ENCODE measurements at regions of chr22 and their contacts with region 1.

Region 1: DNA sequence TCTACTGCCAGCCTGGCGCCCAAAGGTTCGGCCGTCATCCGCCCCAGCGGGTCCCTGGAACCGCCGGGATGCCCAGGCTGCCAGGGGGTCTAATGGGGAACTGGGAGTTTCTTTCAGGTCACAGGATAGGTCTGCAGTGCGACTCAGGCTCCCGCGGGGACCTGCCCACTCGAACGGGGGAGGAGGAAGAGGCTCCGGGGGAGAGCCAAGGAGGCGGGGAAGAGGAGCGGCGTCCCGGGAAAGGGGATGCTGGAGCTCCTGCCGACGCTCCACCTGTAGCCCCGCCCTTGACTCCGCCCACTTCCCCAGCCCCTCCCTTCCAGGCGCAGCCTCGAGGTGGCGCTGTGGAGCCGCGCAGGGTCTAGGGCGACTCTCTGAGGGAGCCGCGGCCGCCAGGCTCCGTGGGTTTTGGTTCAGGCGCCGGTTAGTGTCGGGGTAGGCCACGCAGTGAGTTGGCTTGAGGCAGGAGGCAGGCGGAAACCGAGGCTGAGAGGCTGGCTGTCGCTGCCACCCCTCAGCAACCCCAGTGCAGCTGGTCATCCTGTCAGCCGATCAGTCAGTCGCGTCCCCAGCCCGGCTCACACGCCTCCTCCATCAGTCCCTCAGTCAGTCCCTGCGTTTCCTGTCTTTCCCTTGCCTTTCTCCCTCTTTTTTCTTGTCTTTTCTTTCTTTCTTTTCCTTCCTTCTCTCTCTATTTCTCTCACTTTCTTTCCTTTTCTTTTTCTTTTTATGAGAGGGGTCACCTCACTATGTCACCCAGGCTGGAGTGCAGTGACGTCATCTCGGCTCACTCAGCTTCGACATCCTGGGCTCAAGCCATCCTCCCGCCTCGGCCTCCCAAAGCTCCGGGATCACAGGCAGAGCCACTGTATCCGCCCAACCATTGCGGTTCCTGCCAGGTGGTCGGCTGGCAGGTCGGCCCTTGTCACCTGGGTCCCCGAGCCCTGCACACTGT is 26.4 kb downstream of the YWHAH start:
- DNase-seq: peak; percentile 91
- H3K4me3 ChIP-seq: peak overlapping the region in 3 of 4 donors; percentile 25 to 51 (median 36)
- H3K27ac ChIP-seq: peak overlapping the region in 3 of 4 donors; percentile 9 to 51 (median 37)
- H3K4me1 ChIP-seq: peaks cover 4 to 37% (median 16%) of the 10 kb centered on the region in 4 donors
- H3K27me3 ChIP-seq: no peaks in the 10 kb centered on the region
- CTCF ChIP-seq: peak; percentile 77 to 96 (median 93)
- EP300 ChIP-seq: no peak
- POLR2A ChIP-seq: peak; percentile 38

Region 2: DNA sequence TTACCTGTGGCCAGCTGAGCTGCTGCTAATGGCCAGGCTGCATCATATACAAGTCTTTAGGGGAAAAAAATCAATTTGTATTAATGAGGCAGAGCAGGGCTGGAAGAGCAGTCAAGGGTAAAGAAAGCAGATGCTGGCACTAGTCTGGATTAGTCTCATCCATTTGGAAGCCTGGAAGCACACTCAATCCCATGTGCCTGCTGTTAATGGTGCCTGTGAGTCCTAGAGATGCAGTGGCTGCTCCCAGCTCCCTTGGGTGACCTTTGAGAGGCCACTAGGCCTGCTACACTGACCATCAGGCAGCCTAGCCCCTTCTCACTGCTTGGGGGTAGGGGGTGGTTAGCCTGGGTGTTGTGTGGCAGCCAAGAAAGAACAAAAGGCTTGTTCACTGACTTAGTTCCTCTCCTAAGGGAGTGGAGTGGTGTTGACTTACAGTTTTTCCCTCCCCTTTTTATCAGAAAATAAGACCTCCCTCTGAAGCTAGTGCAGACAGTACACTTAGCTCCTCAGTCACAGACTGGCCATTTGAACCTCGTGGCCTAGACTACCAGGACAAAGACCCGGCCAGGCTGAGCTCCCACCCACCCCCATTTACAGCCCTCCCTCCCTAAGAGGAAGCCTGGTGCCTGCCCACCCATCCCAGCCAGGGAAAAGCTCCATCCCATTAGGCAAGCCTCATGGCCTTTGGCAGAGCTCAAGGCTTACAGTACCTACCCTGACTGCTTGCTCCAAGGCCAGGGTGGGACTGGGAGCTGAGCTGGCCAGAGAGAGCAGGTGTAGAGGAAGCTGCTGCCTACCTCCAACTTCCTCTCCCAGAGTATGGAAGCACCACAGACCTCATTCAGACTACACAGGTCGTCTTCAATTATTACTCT is 686.2 kb before region 1 on chr22:
- in situ Hi-C with region 1: no loop called
- intact Hi-C with region 1: no loop called
- DNase-seq: no peak
- H3K4me3 ChIP-seq: no peak overlapping the region
- H3K27ac ChIP-seq: peak overlapping the region; percentile 95 to 99 (median 98)
- H3K4me1 ChIP-seq: peaks cover 9 to 63% (median 13%) of the 10 kb centered on the region in 4 donors
- H3K27me3 ChIP-seq: no peaks in the 10 kb centered on the region
- CTCF ChIP-seq: no peak
- EP300 ChIP-seq: no peak
- POLR2A ChIP-seq: no peak

Region 3: DNA sequence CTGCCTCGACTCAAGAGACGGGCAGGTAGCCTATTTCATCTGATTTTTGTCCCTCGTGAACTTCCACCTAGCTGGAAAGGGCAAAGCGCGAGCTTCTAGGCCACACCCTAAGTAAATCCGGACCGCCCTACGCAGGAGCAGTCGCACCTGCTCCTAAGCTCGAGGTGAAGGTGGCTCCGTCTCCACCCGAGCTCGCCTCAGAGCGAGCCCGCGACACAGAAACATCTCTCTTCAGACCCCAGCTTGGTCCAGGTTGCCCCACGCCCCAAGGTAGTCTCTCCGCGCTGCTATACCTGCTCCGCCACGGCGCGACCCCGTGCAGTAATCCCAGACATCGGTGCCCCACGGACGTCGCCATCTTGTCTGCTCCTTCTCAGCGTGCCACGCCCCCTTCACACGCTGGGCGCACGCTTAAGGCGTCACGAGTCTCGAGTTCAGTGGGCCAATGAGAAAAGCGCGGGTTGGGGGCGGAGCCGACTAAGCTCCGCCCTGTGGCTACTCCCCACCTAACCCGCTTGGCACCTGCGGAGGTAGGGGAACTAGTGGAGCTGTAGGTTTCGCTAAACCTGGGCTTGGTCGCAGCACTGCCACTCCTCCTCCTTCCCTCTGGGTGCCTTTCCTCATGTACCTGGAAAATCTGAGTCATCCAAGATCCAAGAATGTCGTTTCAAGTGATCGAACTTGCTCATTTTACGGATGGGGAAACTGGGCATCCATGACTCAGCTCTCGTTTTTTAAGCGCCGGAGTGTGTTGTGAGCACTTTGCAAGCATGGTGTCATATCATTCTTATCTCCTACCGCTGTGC is 308.7 kb before region 1 on chr22 and contains the start of gene PISD:
- in situ Hi-C with region 1: loop called in 3 of 4 experiments (anchors 10 to 25 kb)
- intact Hi-C with region 1: no loop called
- DNase-seq: peak; percentile 98
- H3K4me3 ChIP-seq: peak within 1 kb of the TSS; percentile 63 to 97 (median 78)
- H3K27ac ChIP-seq: peak within 1 kb of the TSS; percentile 80 to 86 (median 84)
- H3K4me1 ChIP-seq: peaks cover 9 to 17% (median 14%) of the 10 kb centered on the region in 4 donors
- H3K27me3 ChIP-seq: no peaks in the 10 kb centered on the region
- CTCF ChIP-seq: no peak
- EP300 ChIP-seq: no peak
- POLR2A ChIP-seq: peak; percentile 90
- total RNA-seq, gene PISD: 33.7 to 111 (median 47.7) TPM

Region 4: DNA sequence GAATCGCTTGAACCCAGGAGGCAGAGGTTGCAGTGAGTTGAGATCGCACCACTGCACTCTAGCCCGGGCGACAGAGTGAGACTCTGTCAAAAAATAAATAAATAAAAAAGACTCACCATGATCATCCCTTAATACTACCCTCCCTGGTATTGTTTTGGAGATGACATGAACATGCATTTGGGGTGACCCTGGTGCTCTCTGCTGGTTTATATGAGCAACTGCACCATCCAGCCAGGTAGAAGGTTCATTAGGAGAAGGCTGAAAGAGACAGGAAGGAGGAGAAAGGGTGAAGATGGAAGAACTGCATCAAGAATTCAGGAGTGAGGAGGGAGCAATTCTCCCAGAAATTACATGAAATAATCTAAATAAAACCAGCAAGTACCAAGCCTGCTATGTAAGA is 110.1 kb after region 1 on chr22:
- in situ Hi-C with region 1: loop called in 3 of 4 experiments (anchors 5 to 25 kb)
- intact Hi-C with region 1: no loop called
- DNase-seq: peak; percentile 39
- H3K4me3 ChIP-seq: no peak overlapping the region
- H3K27ac ChIP-seq: no peak overlapping the region
- H3K4me1 ChIP-seq: peaks cover 0 to 33% (median 6%) of the 10 kb centered on the region in 4 donors
- H3K27me3 ChIP-seq: no peaks in the 10 kb centered on the region
- CTCF ChIP-seq: peak; percentile 47 to 82 (median 64)
- EP300 ChIP-seq: no peak
- POLR2A ChIP-seq: no peak

Region 5: GRCh38 chr22:32142600-32142999 is 171.8 kb after region 1 on chr22:
- in situ Hi-C with region 1: no loop called
- intact Hi-C with region 1: no loop called
- DNase-seq: no peak
- H3K4me3 ChIP-seq: no peak overlapping the region
- H3K27ac ChIP-seq: no peak overlapping the region
- H3K4me1 ChIP-seq: no peaks in the 10 kb centered on the region
- H3K27me3 ChIP-seq: no peaks in the 10 kb centered on the region
- CTCF ChIP-seq: no peak
- EP300 ChIP-seq: no peak
- POLR2A ChIP-seq: no peak

Region 6: GRCh38 chr22:32265882-32266767 is 295.4 kb after region 1 on chr22:
- in situ Hi-C with region 1: loop called in 3 of 4 experiments (anchors 10 to 25 kb)
- intact Hi-C with region 1: loop called (anchors 10 kb)
- DNase-seq: peak; percentile 66
- H3K4me3 ChIP-seq: peak overlapping the region in 1 of 4 donors; percentile 12
- H3K27ac ChIP-seq: peak overlapping the region in 1 of 4 donors; percentile 44
- H3K4me1 ChIP-seq: peaks cover 0 to 8% (median 0%) of the 10 kb centered on the region in 4 donors
- H3K27me3 ChIP-seq: no peaks in the 10 kb centered on the region
- CTCF ChIP-seq: peak; percentile 72 to 81 (median 76)
- EP300 ChIP-seq: no peak
- POLR2A ChIP-seq: no peak

Region 7: DNA sequence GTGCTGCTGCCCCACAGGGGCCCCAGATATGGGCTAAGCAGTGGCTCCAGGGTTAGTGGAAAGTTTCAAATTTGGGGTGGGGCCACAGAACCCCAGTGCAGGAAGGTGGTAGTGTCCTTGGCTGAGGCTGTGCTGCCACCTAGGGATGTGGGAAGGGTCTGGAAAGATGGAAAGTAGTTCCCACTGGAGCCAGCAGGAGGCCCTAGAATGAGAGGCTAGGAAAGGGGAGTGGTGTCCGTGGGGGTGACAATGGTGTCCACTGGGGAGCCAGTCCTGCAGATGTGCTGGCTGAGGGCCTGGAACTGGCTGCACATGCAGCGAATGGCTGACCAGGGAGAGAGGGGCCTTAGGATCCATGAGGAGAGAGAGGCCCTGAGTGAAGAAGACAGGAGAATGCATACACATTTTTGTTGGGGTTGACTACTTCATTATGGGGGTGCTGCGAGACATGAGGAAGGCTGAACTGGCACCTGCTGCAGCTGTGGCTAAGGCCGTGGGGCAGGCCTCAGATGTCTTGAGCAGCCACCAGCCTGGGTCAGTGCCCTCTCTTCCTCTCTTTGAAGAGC is 408.0 kb after region 1 on chr22:
- in situ Hi-C with region 1: no loop called
- intact Hi-C with region 1: no loop called
- DNase-seq: peak; percentile 22
- H3K4me3 ChIP-seq: no peak overlapping the region
- H3K27ac ChIP-seq: no peak overlapping the region
- H3K4me1 ChIP-seq: no peaks in the 10 kb centered on the region
- H3K27me3 ChIP-seq: no peaks in the 10 kb centered on the region
- CTCF ChIP-seq: peak; percentile 19 to 55 (median 40)
- EP300 ChIP-seq: no peak
- POLR2A ChIP-seq: no peak

Region 8: GRCh38 chr22:32474635-32475467 is 504.1 kb after region 1 on chr22 and contains the start of gene FBXO7:
- in situ Hi-C with region 1: loop called in 3 of 4 experiments (anchors 25 kb)
- intact Hi-C with region 1: no loop called
- DNase-seq: peak; percentile 93
- H3K4me3 ChIP-seq: peak within 1 kb of the TSS; percentile 67 to 95 (median 93)
- H3K27ac ChIP-seq: peak within 1 kb of the TSS; percentile 97 to 100 (median 98)
- H3K4me1 ChIP-seq: peaks cover 15 to 41% (median 29%) of the 10 kb centered on the region in 4 donors
- H3K27me3 ChIP-seq: no peaks in the 10 kb centered on the region
- CTCF ChIP-seq: peak in 4 of 5 experiments; percentile 17 to 53 (median 36)
- EP300 ChIP-seq: no peak
- POLR2A ChIP-seq: peak; percentile 91
- total RNA-seq, gene FBXO7: 70.3 to 80.1 (median 76.4) TPM

Region 9: GRCh38 chr22:33803371-33804282 is 1832.9 kb after region 1 on chr22:
- in situ Hi-C with region 1: no loop called
- intact Hi-C with region 1: loop called (anchors 10 kb)
- DNase-seq: no peak
- H3K4me3 ChIP-seq: no peak overlapping the region
- H3K27ac ChIP-seq: peak overlapping the region; percentile 62 to 74 (median 68)
- H3K4me1 ChIP-seq: peaks cover 3 to 31% (median 10%) of the 10 kb centered on the region in 4 donors
- H3K27me3 ChIP-seq: no peaks in the 10 kb centered on the region
- CTCF ChIP-seq: no peak
- EP300 ChIP-seq: no peak
- POLR2A ChIP-seq: no peak

Measured in transverse colon (tissue), 4 donors.